Sigmoid colon (tissue), 7 donors: ENCODE measurements at regions of chr1 and their contacts with region 1.

Region 1: GRCh38 chr1:204989266-204990058 is 53.5 kb upstream of the CNTN2 start:
- DNase-seq: peak; percentile 87
- H3K4me3 ChIP-seq: no peak overlapping the region
- H3K27ac ChIP-seq: peak overlapping the region; percentile 44 to 65 (median 58)
- H3K4me1 ChIP-seq: peaks cover 0 to 5% (median 0%) of the 10 kb centered on the region in 4 donors
- H3K27me3 ChIP-seq: no peaks in the 10 kb centered on the region
- CTCF ChIP-seq: peak; percentile 62 to 85 (median 80)
- EP300 ChIP-seq: no peak
- POLR2A ChIP-seq: no peak

Region 2: GRCh38 chr1:204941421-204942338 is 47.8 kb before region 1 on chr1:
- intact Hi-C with region 1: no loop called
- DNase-seq: peak; percentile 81
- H3K4me3 ChIP-seq: no peak overlapping the region
- H3K27ac ChIP-seq: peak overlapping the region in 2 of 4 donors; percentile 58
- H3K4me1 ChIP-seq: peaks cover 0 to 17% (median 7%) of the 10 kb centered on the region in 4 donors
- H3K27me3 ChIP-seq: no peaks in the 10 kb centered on the region
- CTCF ChIP-seq: peak; percentile 74 to 94 (median 90)
- EP300 ChIP-seq: no peak
- POLR2A ChIP-seq: no peak

Region 3: DNA sequence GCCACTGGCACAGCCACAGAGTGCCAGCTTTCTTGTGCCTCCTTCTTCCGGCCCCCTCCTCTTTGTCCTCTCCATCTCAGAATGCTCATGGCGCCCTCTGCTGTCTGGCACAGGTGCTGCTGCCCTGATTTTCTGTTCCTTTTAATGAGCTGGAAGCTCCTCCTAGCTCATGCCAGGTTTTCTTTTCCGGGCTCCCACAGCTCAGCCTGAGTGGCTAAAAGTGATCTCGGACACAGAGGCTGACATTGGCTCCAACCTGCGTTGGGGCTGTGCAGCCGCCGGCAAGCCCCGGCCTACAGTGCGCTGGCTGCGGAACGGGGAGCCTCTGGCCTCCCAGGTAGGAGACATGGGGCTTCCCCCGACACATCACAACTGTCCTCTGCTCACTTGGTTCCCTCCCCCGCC is 72.2 kb after region 1 on chr1:
- intact Hi-C with region 1: loop called (anchors 1 kb)
- DNase-seq: peak; percentile 77
- H3K4me3 ChIP-seq: no peak overlapping the region
- H3K27ac ChIP-seq: no peak overlapping the region
- H3K4me1 ChIP-seq: peaks cover 0 to 8% (median 7%) of the 10 kb centered on the region in 4 donors
- H3K27me3 ChIP-seq: no peaks in the 10 kb centered on the region
- CTCF ChIP-seq: peak; percentile 64 to 83 (median 76)
- EP300 ChIP-seq: no peak
- POLR2A ChIP-seq: no peak

Region 4: GRCh38 chr1:205141236-205142101 is 152.0 kb after region 1 on chr1:
- intact Hi-C with region 1: loop called (anchors 10 kb)
- DNase-seq: peak; percentile 82
- H3K4me3 ChIP-seq: peak overlapping the region in 1 of 4 donors; percentile 11
- H3K27ac ChIP-seq: peak overlapping the region in 1 of 4 donors; percentile 3
- H3K4me1 ChIP-seq: peaks cover 0 to 33% (median 22%) of the 10 kb centered on the region in 4 donors
- H3K27me3 ChIP-seq: no peaks in the 10 kb centered on the region
- CTCF ChIP-seq: peak; percentile 34 to 83 (median 77)
- EP300 ChIP-seq: no peak
- POLR2A ChIP-seq: no peak